ENCODE measurements at regions of chr22 and their contacts with region 1.

Region 1: DNA sequence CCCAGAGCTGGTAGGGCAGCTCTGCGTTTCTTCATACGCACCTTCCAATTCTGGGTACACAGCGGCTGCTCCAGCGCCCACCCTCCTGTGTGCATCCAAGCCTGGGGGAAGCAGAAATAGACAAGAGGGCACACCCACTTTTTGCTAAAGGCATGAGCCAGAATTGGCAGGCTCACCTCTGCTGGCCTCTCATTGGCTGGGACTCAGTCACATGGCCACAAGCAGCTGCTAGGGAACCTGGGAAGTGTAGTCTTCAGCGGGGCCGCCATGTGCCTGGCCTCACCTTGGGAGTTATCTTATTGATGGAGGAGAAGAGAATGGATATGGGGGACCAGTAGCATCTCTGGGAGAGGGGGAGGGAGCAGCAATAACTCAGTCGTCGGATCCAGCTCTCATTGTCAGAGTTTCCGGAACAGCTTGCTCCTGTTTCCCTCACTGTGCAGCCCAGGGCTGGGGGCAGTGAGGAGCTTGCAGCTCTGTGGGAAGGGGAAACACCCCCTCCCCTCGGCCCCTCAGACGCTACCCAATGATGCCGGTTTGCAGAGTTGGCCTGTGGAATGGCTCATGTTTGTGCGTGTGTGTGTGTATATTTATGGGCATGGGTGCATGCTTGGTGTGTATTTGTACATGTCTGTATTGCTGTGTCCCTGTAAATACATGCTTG is 11.8 kb upstream of the MIEF1 start:
- DNase-seq: peak; percentile 39 to 81
- H3K4me3 ChIP-seq: no peak overlapping the region
- H3K27ac ChIP-seq: no peak overlapping the region
- H3K4me1 ChIP-seq: peaks cover 0 to 6% (median 4%) of the 10 kb centered on the region in 4 experiments; a peak in 4 of 7 replicates
- H3K27me3 ChIP-seq: peaks cover 0 to 13% (median 3%) of the 10 kb centered on the region in 4 experiments; a peak in 4 of 7 replicates
- CTCF ChIP-seq: no peak
- EP300 ChIP-seq: no peak
- POLR2A ChIP-seq: no peak
- RAD21 ChIP-seq: no peak

Region 2: GRCh38 chr22:39454385-39454871 is 35.8 kb before region 1 on chr22:
- CTCF ChIA-PET with region 1: interaction called, 16 read pairs
- POLR2A ChIA-PET with region 1: no interaction called
- DNase-seq: no peak
- H3K4me3 ChIP-seq: no peak overlapping the region
- H3K27ac ChIP-seq: no peak overlapping the region
- H3K4me1 ChIP-seq: peaks cover 0 to 30% (median 20%) of the 10 kb centered on the region in 4 experiments; a peak in 6 of 7 replicates
- H3K27me3 ChIP-seq: peaks cover 5 to 24% (median 18%) of the 10 kb centered on the region in 4 experiments; a peak in 6 of 7 replicates
- CTCF ChIP-seq: no peak
- EP300 ChIP-seq: no peak
- POLR2A ChIP-seq: no peak
- RAD21 ChIP-seq: no peak

Region 3: DNA sequence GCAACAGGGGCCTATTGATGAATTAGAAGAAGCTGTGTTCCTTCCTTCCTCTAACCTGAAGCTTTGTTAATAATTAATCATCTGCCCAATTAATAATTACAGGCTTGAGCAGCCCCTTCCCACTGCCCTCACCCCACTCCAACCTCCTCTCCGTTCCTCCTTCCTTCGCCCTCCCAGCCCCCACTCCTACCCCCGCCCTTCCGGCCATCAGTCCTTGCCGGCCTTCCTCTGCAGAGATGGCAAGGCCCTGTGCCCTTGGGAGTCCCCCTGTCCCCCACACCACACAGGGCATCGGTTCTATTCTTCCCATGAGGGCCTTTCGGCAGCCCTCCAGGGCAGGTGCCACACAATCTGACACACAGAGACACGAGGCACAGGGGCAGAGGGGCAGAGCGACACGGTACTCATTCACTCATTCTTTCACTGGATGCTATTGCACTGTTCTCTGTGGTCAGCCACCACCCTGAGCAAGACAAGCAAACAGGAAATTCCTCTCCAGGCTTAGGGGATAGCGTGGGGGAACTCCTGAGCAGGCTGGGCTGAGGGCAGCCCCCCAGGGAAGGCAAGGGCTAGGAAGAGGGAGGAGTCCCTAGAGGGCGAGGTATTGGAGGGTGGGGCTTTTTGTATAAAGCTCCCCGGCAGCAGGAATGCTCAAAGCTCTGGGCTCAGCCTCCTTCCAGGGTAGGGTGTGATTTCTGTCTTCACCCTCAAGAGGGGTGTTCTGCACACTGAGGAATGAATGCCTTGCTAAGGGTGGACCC is 18.7 kb before region 1 on chr22:
- CTCF ChIA-PET with region 1: interaction called, 120 read pairs
- POLR2A ChIA-PET with region 1: interaction called, 5 read pairs
- DNase-seq: no peak
- H3K4me3 ChIP-seq: no peak overlapping the region; a peak in 1 of 8 replicates
- H3K27ac ChIP-seq: no peak overlapping the region
- H3K4me1 ChIP-seq: peaks cover 16 to 51% (median 39%) of the 10 kb centered on the region in 4 experiments
- H3K27me3 ChIP-seq: no peaks in the 10 kb centered on the region
- CTCF ChIP-seq: no peak
- EP300 ChIP-seq: no peak
- POLR2A ChIP-seq: no peak
- RAD21 ChIP-seq: no peak

Region 4: GRCh38 chr22:39502109-39502788 is 12.0 kb after region 1 on chr22 and contains the start of gene MIEF1:
- CTCF ChIA-PET with region 1: interaction called, 46 read pairs
- POLR2A ChIA-PET with region 1: interaction called, 5 read pairs
- DNase-seq: peak; percentile 88 to 99
- H3K4me3 ChIP-seq: peak within 1 kb of the TSS; percentile 68 to 88 (median 80)
- H3K27ac ChIP-seq: no peak within 1 kb of the TSS
- H3K4me1 ChIP-seq: peaks cover 3 to 9% (median 4%) of the 10 kb centered on the region in 4 experiments; a peak in 6 of 7 replicates
- H3K27me3 ChIP-seq: peaks cover 0 to 56% (median 36%) of the 10 kb centered on the region in 4 experiments; a peak in 6 of 7 replicates
- CTCF ChIP-seq: no peak
- EP300 ChIP-seq: no peak
- POLR2A ChIP-seq: peak in 1 of 2 experiments; percentile 78; a peak in 2 of 3 replicates
- RAD21 ChIP-seq: no peak
- total RNA-seq, gene MIEF1: 31.4 and 32.7 TPM in 2 replicates

Region 5: DNA sequence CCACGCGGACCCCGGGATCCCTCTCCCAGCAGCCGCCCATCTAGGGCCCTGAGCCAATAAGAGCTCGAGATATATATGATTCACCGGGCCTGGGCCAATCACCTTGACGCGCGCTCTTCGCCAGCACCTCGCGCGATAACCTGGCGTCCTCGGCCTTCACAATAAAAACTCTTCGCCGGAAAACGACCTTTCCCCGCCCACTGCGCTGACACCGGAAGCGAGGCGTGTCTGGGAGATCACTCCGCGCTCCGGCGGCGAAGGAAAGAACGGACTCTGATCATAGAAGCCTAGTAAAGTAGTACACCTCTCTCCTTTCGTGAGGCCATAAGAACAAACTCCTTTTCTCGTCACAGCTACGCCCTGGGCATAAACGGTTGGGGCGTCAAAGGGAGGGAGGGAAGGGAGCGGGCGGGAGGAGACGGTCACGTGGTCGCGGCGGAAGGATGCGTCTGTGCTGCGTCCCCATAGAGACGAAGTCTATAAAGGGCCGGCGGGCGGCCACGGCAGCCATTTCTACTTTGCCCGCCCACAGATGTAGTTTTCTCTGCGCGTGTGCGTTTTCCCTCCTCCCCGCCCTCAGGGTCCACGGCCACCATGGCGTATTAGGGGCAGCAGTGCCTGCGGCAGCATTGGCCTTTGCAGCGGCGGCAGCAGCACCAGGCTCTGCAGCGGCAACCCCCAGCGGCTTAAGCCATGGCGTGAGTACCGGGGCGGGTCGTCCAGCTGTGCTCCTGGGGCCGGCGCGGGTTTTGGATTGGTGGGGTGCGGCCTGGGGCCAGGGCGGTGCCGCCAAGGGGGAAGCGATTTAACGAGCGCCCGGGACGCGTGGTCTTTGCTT is 30.0 kb after region 1 on chr22 and contains the start of gene ATF4:
- CTCF ChIA-PET with region 1: interaction called, 361 read pairs
- POLR2A ChIA-PET with region 1: interaction called, 83 read pairs
- DNase-seq: peak; percentile 93 to 96
- H3K4me3 ChIP-seq: peak within 1 kb of the TSS; percentile 93 to 99 (median 95)
- H3K27ac ChIP-seq: peak within 1 kb of the TSS; percentile 99
- H3K4me1 ChIP-seq: peaks cover 0 to 12% (median 5%) of the 10 kb centered on the region in 4 experiments; a peak in 4 of 7 replicates
- H3K27me3 ChIP-seq: peaks cover 0 to 6% (median 2%) of the 10 kb centered on the region in 4 experiments; a peak in 3 of 7 replicates
- CTCF ChIP-seq: no peak
- EP300 ChIP-seq: no peak; a peak in 1 of 3 replicates
- POLR2A ChIP-seq: peak; percentile 96 to 98
- RAD21 ChIP-seq: no peak
- total RNA-seq, gene ATF4: 543 and 553 TPM in 2 replicates

Region 6: GRCh38 chr22:39568278-39568981 is 78.2 kb after region 1 on chr22:
- CTCF ChIA-PET with region 1: no interaction called
- POLR2A ChIA-PET with region 1: no interaction called
- DNase-seq: no peak
- H3K4me3 ChIP-seq: no peak overlapping the region
- H3K27ac ChIP-seq: no peak overlapping the region
- H3K4me1 ChIP-seq: 0 out of 7 replicates have a peak, but pooled peaks cover 0 to 4% (median 0%) of the 10 kb centered on the region in 4 experiments
- H3K27me3 ChIP-seq: peaks cover 0 to 6% (median 0%) of the 10 kb centered on the region in 4 experiments; a peak in 2 of 7 replicates
- CTCF ChIP-seq: no peak
- EP300 ChIP-seq: no peak
- POLR2A ChIP-seq: no peak
- RAD21 ChIP-seq: no peak